Activated naive CD4-positive, alpha-beta T cell treated with anti-CD3 and anti-CD28 coated beads for 36 hours (primary cell): ENCODE measurements at regions of chr22 and their contacts with region 1.

Region 1: DNA sequence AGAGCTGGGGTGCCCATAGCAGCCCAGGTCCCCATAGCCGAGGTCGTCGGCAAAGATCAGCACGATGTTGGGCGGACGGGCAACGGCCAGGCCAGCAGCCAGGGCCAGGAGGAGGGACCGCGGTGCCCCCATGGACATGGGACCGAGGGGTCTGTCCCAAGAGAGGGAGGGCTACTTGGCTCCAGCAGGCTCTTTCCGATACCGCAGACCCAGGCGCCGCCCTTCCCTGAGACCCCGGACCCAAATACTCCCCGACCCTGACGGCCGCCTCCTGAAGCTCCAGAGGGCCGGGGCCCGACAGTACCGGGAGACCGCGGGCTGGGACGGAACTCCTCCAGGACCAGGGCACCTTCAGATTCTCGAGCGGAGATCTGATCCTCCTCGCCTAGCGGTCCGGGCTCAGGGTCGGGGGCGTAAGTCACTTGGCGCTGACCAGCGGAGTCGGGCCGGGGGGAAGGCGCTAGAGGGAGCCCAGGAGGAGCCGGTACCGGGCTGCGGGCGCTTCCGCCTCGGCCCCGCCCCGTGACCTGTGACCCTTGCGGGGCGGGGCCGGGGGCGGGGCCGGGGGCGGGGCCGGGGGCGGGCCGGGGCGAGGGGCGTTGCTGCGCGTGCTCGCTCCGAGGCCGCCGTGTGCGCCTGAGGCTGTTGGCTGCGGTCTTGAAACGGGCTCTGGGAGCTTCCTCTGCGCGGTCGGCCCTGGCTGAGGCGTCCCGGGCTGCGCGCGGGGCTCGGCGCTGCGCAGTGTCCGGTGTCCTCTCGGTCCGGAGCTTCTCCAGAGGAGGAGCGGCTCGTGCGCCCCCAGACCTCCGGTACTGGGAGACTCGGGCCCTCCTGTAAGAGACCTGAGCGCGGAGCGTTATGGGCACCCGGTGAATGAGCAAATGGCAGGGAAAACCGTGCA is at the start of gene ARSA:
- DNase-seq: peak; percentile 81
- H3K4me3 Mint-ChIP-seq: peak within 1 kb of the TSS; percentile 84
- H3K27ac Mint-ChIP-seq: peak within 1 kb of the TSS; percentile 56
- H3K4me1 Mint-ChIP-seq: peaks cover 17% of the 10 kb centered on the region
- H3K27me3 Mint-ChIP-seq: no peaks in the 10 kb centered on the region
- total RNA-seq, gene ARSA: 17.8 to 19.2 TPM

Region 2: GRCh38 chr22:50612528-50613221 is 15.2 kb before region 1 on chr22:
- CTCF ChIA-PET with region 1: no interaction called
- intact Hi-C with region 1: no loop called
- DNase-seq: no peak
- H3K4me3 Mint-ChIP-seq: no peak overlapping the region
- H3K27ac Mint-ChIP-seq: no peak overlapping the region
- H3K4me1 Mint-ChIP-seq: peaks cover 4% of the 10 kb centered on the region
- H3K27me3 Mint-ChIP-seq: peaks cover 15% of the 10 kb centered on the region

Region 3: GRCh38 chr22:50691521-50691920 is 63.6 kb after region 1 on chr22:
- CTCF ChIA-PET with region 1: interaction called, 6 read pairs
- intact Hi-C with region 1: loop called (anchors 2 kb)
- DNase-seq: peak; percentile 75
- H3K4me3 Mint-ChIP-seq: no peak overlapping the region
- H3K27ac Mint-ChIP-seq: no peak overlapping the region
- H3K4me1 Mint-ChIP-seq: peaks cover 4% of the 10 kb centered on the region
- H3K27me3 Mint-ChIP-seq: peaks cover 3% of the 10 kb centered on the region